GM13977 (cell line): ENCODE measurements at regions of chr16 and their contacts with region 1.

Region 1: DNA sequence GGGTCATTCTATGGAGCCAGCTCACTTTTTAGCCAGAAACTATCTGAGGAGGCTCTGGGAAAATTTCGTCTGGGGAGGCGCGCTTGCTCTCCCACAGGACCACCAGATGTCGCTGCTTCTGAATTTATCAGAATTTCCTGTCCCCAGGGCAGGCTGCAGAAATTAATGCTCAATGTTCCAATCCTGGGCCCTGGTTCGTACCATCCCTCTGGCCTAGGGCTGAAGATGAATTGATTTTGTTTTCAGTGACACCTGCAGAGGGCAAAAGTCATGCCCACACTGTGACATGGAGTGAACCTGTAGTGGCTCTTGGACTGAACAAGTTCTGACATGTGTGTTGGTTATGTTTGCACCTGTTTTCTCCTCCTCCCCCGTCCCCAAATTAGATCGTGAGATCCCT is 482.6 kb downstream of the NPIPA7 start:
- DNase-seq: peak; percentile 64
- CTCF ChIP-seq: peak; percentile 80

Region 2: DNA sequence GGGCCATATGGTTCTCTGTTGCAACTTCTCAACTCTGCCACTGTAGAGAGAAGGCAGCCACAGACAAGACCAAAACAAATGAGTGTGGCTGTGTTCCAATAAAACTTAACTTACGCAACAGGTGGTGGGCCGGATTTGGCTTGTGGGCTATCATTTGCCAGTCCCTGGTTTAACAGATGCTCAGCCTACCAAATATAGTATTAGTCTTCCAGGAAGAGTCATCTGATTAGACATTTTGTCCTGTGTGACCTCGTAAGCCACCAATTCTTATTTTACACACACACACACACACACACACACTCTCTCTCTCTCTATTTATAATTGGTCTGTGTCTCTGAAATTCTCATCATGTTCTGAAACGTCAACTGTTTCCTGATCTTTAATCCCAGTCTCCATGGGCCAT is 363.3 kb after region 1 on chr16:
- in situ Hi-C with region 1: loop called (anchors 25 kb)
- DNase-seq: peak; percentile 24
- CTCF ChIP-seq: no peak

Region 3: DNA sequence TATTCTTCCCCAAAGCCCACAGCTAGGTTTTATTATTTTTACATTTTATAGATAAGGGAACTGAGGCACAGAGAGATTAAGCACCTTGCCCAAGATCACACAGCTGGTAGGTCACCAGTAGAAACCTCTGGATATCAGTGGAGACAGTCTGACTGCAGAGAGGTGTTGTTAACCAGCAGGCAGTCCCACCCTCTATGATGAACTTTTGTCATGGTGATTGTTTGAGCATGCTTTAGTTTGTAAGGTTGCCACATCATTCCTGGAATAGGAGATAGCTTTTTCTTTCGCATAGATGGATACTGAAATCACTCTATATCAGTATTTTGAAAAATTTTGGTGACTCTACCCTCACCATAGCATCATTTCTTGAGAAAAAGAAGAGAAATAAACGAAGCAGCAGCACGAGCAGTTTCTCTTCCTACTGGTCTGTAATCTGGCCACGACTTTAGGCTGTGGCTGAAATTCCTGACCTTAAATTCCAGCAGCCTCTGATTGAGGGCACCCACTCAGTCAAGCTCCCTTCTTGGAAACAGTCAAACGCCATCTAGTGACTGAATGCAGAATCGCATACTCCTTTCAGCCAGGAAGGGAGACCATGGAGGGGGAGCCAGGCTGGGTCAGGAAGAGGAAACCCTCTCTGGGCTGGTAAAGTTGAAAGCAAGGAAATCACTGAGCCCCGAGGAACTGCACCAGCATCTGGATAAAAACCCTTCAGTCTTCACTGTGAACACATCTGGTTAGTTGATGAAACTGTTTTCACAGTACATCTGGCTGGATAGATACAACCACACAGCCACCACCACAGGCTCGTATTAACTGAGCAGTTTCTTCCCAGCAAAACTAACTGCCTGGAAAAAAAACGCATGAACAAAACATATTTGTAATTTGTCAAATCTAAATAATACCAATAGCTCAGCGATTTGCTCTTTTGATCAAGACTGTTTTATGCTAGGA is 717.7 kb after region 1 on chr16:
- in situ Hi-C with region 1: loop called (anchors 25 kb)
- DNase-seq: peak; percentile 54
- CTCF ChIP-seq: peak; percentile 89